ENCODE measurements at regions of chr3 and their contacts with region 1.

Region 1: GRCh38 chr3:170405101-170405500 is 13.6 kb upstream of the CLDN11 start:
- DNase-seq: no peak
- H3K4me3 ChIP-seq: no peak overlapping the region
- H3K27ac ChIP-seq: no peak overlapping the region
- H3K4me1 ChIP-seq: no peaks in the 10 kb centered on the region
- H3K27me3 ChIP-seq: no peaks in the 10 kb centered on the region
- CTCF ChIP-seq: no peak

Region 2: DNA sequence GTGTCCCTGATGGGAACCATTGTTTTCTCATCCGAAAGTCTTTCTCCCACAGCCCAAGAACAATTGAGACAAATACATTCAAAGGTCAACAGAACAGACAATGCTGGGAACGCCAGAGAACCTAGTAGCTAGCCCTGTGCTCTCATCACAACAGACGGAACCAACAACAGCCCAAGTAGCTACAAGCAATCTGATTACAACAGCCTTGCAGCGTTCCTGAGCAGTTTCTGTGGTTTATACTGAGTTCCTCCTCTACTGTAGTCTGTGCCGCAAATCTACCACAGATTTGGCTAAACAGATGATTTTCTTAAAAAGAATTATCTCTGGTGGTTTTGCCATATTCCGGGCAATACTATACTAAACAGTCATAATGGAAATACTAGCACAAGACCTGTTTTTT is 1177.2 kb before region 1 on chr3:
- intact Hi-C with region 1: no loop called
- DNase-seq: no peak
- H3K4me3 ChIP-seq: no peak overlapping the region
- H3K27ac ChIP-seq: no peak overlapping the region
- H3K4me1 ChIP-seq: peaks cover 0 to 9% (median 5%) of the 10 kb centered on the region in 3 donors
- H3K27me3 ChIP-seq: no peaks in the 10 kb centered on the region
- CTCF ChIP-seq: no peak

Region 3: DNA sequence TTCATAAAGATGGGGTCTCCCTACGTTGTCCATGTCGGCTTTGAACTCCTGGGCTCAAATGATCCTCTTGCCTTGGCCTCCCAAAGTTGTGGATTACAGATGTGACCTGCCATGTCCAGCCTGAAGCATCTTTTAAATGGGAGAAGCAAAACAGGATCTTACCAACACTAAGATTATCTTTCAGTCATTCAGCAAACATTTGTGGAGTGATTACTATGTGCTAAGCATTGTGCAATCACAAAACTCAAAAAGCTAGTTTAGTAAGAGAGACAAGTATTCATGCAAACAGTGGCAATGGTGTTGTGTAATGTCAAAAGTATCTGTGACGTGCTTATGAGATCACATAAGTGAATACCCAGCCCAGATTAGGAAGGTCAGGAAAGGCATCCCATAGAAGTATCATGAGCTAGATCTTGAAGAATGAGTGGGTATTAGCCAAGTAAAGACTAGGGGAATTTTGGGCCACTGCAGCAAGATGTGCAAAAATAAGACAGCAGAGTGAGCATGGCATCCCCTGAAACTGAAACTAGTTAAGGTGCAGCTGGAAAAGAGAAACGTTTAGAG is 406.5 kb before region 1 on chr3:
- intact Hi-C with region 1: no loop called
- DNase-seq: no peak
- H3K4me3 ChIP-seq: no peak overlapping the region
- H3K27ac ChIP-seq: no peak overlapping the region
- H3K4me1 ChIP-seq: no peaks in the 10 kb centered on the region
- H3K27me3 ChIP-seq: no peaks in the 10 kb centered on the region
- CTCF ChIP-seq: no peak

Region 4: DNA sequence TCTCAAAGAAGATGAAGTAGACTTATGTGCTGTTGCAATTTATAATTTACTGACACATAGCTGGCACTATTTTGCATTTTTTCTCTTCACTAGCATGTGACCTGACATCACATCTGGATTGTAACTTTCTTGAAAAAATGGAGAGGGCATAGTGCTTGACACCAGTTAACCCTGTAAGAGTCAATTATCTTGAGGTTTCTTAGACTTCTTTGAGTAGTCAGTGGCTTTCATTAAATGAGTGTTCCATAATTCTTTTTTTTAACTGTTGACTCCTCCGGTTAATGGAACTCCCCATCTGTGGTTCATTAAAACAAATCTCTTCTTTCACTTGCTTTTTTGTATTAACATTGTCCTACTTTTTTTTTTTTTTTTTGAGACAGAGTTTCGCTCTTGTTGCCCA is 199.8 kb before region 1 on chr3:
- intact Hi-C with region 1: no loop called
- DNase-seq: peak in 2 of 5 donors; percentile 10 to 62
- H3K4me3 ChIP-seq: no peak overlapping the region
- H3K27ac ChIP-seq: no peak overlapping the region
- H3K4me1 ChIP-seq: no peaks in the 10 kb centered on the region
- H3K27me3 ChIP-seq: no peaks in the 10 kb centered on the region
- CTCF ChIP-seq: no peak

Region 5: GRCh38 chr3:170317954-170318353 is 87.1 kb before region 1 on chr3:
- intact Hi-C with region 1: loop called (anchors 10 kb)
- DNase-seq: peak in 1 of 5 donors; percentile 25
- H3K4me3 ChIP-seq: no peak overlapping the region
- H3K27ac ChIP-seq: no peak overlapping the region
- H3K4me1 ChIP-seq: peaks cover 2 to 8% (median 6%) of the 10 kb centered on the region in 3 donors
- H3K27me3 ChIP-seq: no peaks in the 10 kb centered on the region
- CTCF ChIP-seq: no peak

Region 6: DNA sequence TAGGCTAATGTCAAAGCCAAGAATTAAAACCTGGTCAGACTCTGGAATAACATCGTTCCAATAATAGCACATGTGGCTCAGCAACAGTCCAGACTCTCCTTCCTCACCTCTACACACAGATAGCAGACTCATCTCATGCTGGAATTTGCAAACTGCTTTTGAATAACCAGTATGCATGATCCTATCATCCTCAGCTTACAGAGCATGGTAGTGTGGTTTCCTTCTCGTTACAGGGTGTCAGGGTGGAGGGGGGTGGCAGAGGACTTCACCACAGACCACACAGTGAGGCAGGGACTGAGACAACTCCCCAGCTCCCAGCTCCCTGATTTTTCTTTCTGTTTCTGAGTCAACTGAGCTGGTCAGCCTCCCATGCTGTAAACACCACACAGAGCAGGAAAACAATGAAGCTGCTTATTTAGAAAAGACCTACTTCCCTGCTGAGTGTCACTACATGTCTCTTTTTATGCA is 363.3 kb after region 1 on chr3:
- intact Hi-C with region 1: no loop called
- DNase-seq: no peak
- H3K4me3 ChIP-seq: no peak overlapping the region
- H3K27ac ChIP-seq: no peak overlapping the region
- H3K4me1 ChIP-seq: peaks cover 0 to 5% (median 2%) of the 10 kb centered on the region in 3 donors
- H3K27me3 ChIP-seq: no peaks in the 10 kb centered on the region
- CTCF ChIP-seq: no peak

Measured in kidney (tissue), 22 donors.